GM12878 (cell line): ENCODE measurements at regions of chr15 and their contacts with region 1.

Region 1: DNA sequence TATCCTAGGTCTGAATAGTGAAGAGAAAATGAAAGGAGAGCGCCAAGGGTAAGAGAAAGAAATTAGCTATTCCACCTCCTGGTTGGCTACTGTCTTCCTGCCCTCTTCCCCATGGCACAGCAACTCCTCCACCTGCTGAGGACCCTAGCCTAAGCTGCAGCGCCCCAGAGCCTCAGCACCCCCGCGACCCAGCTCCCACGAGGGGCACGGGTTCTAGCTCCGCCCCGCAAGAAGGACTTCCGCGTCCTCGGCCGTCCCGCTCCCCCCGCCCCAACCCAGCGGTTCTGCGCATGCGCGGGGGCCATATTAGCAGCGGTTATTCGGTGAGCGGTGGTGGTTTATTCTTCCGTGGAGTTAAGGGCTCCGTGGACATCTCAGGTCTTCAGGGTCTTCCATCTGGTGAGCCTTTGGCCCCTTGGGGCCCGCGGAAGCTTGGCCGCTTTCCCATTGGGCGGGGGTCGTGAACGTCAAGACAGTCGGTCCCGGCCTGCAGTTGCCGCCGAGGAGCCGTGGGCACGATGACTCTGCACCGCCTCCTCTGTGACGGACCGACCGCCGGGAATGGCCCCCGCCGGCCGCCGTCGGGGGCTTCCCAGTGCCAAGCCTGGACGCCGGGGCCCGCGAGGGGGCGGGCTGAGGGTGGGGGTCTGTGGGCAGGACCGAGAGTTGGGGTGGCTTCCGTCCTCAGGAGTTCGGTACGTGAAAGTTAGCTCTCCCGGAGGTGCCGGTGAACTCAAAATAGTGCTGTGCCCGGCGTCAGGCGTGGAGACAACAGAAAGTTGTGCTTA is at the start of gene PSMA4:
- DNase-seq: peak; percentile 68
- ATAC-seq: peak; percentile 90
- H3K4me3 ChIP-seq: peak within 1 kb of the TSS; percentile 71
- H3K27ac ChIP-seq: peak within 1 kb of the TSS; percentile 96
- H3K4me1 ChIP-seq: peaks cover 3% of the 10 kb centered on the region; the same call in 1 of the 2 replicates
- H3K27me3 ChIP-seq: no peaks in the 10 kb centered on the region
- CTCF ChIP-seq: peak in 1 of 3 experiments; percentile 17; a peak in 1 of 6 replicates
- EP300 ChIP-seq: no peak
- POLR2A ChIP-seq: peak; percentile 93
- RAD21 ChIP-seq: no peak
- polyA plus RNA-seq, gene PSMA4: 1,117 to 1,221 TPM

Region 2: DNA sequence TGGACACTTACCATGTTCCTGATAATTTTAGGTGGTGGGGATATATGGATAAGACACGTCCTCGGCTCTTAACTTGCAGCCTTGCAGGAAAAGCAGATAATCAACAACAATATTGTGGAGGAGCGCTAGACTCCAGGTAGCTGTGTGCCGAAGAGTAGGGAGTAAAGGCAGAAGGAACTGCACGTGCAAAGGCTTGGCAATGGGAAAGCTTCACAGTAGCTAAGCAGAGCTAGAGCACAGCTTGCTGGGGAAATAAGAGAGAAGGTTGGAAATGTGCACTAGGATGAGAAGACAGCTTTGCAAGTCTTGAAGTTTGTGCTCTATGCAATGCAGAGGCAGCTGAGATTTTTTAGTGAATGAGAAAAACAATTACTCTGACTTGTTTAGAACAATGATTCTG is 12.3 kb after region 1 on chr15:
- CTCF ChIA-PET with region 1: interaction called, 3 read pairs
- POLR2A ChIA-PET with region 1: interaction called, 5 read pairs
- RAD21 ChIA-PET with region 1: interaction called, 4 read pairs
- SMC1A ChIA-PET with region 1: interaction called, 19 read pairs
- in situ Hi-C with region 1: no loop called
- intact Hi-C with region 1: no loop called
- DNase-seq: no peak
- ATAC-seq: no peak; the same call in 2 of the 3 replicates
- H3K4me3 ChIP-seq: no peak overlapping the region
- H3K27ac ChIP-seq: no peak overlapping the region; the same call in 1 of the 2 replicates
- H3K4me1 ChIP-seq: peaks cover 6% of the 10 kb centered on the region
- H3K27me3 ChIP-seq: no peaks in the 10 kb centered on the region
- CTCF ChIP-seq: no peak
- EP300 ChIP-seq: no peak
- POLR2A ChIP-seq: no peak
- RAD21 ChIP-seq: no peak

Region 3: GRCh38 chr15:78565097-78565951 is 25.0 kb after region 1 on chr15 and contains the start of gene CHRNA5:
- CTCF ChIA-PET with region 1: interaction called, 9 read pairs
- POLR2A ChIA-PET with region 1: interaction called, 23 read pairs
- RAD21 ChIA-PET with region 1: interaction called, 18 read pairs
- SMC1A ChIA-PET with region 1: interaction called, 47 read pairs
- in situ Hi-C with region 1: no loop called
- intact Hi-C with region 1: loop called (anchors 1 kb)
- DNase-seq: peak; percentile 63
- ATAC-seq: peak; percentile 94
- H3K4me3 ChIP-seq: peak within 1 kb of the TSS; percentile 83
- H3K27ac ChIP-seq: peak within 1 kb of the TSS; percentile 62
- H3K4me1 ChIP-seq: peaks cover 5% of the 10 kb centered on the region
- H3K27me3 ChIP-seq: no peaks in the 10 kb centered on the region
- CTCF ChIP-seq: no peak
- EP300 ChIP-seq: no peak
- POLR2A ChIP-seq: peak; percentile 80
- RAD21 ChIP-seq: no peak
- polyA plus RNA-seq, gene CHRNA5: 2.6 to 6.1 TPM